Ovary (tissue), 10 donors: ENCODE measurements at regions of chr10 and their contacts with region 1.

Region 1: DNA sequence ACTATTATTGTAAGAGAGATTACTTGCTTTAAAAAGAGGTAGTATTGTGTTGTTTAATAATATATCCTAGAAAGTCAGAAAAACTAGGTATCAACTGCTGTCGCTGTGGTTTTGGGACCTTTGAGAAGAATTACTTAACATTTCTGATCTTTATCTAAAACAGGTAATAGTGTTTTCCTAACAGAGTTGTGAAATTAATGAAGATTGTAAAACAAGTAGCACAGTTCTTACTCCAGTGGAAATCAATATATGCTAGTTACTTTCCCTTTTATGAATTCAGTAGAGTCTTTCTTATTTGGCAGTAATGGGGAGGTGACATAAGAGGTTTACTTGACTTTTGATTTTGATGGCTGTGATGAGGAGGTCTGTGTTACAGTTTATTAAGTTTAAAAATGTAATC is 58.1 kb downstream of the KIF20B start:
- DNase-seq: no peak
- H3K4me3 ChIP-seq: no peak overlapping the region
- H3K27ac ChIP-seq: no peak overlapping the region
- H3K4me1 ChIP-seq: no peaks in the 10 kb centered on the region
- H3K27me3 ChIP-seq: no peaks in the 10 kb centered on the region
- CTCF ChIP-seq: no peak
- EP300 ChIP-seq: no peak
- POLR2A ChIP-seq: no peak

Region 2: GRCh38 chr10:89738551-89739209 is 20.9 kb before region 1 on chr10:
- intact Hi-C with region 1: loop called in 1 of 4 experiments (anchors 1 kb)
- DNase-seq: no peak
- H3K4me3 ChIP-seq: no peak overlapping the region
- H3K27ac ChIP-seq: no peak overlapping the region
- H3K4me1 ChIP-seq: no peaks in the 10 kb centered on the region
- H3K27me3 ChIP-seq: no peaks in the 10 kb centered on the region
- CTCF ChIP-seq: no peak
- EP300 ChIP-seq: no peak
- POLR2A ChIP-seq: no peak

Region 3: DNA sequence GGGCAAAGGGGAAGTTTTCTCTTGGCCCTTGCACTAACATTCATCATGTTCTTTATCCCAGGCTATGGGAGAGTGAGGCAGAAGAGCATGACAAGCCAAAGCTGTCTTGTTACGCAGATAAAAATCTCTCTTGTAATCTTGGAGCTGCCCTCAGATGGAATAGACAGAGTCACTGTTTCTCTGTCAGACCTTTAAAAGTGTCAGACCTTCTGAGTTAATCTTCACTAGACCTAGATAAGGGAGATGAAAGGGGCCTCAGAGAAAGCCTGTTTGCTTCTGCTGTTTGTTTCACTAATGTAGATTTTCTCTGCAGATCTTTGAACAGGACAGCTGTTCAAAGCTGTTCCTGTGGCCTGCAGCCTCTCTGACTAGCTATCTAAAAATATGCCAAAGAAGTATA is 54.7 kb after region 1 on chr10:
- intact Hi-C with region 1: no loop called
- DNase-seq: no peak
- H3K4me3 ChIP-seq: no peak overlapping the region
- H3K27ac ChIP-seq: no peak overlapping the region
- H3K4me1 ChIP-seq: no peaks in the 10 kb centered on the region
- H3K27me3 ChIP-seq: no peaks in the 10 kb centered on the region
- CTCF ChIP-seq: no peak
- EP300 ChIP-seq: no peak
- POLR2A ChIP-seq: no peak

Region 4: GRCh38 chr10:89873055-89873454 is 113.5 kb after region 1 on chr10:
- intact Hi-C with region 1: no loop called
- DNase-seq: no peak
- H3K4me3 ChIP-seq: no peak overlapping the region
- H3K27ac ChIP-seq: no peak overlapping the region
- H3K4me1 ChIP-seq: no peaks in the 10 kb centered on the region
- H3K27me3 ChIP-seq: no peaks in the 10 kb centered on the region
- CTCF ChIP-seq: no peak
- EP300 ChIP-seq: no peak
- POLR2A ChIP-seq: no peak